CD4-positive, alpha-beta memory T cell (primary cell): ENCODE measurements at regions of chr2 and their contacts with region 1.

Region 1: DNA sequence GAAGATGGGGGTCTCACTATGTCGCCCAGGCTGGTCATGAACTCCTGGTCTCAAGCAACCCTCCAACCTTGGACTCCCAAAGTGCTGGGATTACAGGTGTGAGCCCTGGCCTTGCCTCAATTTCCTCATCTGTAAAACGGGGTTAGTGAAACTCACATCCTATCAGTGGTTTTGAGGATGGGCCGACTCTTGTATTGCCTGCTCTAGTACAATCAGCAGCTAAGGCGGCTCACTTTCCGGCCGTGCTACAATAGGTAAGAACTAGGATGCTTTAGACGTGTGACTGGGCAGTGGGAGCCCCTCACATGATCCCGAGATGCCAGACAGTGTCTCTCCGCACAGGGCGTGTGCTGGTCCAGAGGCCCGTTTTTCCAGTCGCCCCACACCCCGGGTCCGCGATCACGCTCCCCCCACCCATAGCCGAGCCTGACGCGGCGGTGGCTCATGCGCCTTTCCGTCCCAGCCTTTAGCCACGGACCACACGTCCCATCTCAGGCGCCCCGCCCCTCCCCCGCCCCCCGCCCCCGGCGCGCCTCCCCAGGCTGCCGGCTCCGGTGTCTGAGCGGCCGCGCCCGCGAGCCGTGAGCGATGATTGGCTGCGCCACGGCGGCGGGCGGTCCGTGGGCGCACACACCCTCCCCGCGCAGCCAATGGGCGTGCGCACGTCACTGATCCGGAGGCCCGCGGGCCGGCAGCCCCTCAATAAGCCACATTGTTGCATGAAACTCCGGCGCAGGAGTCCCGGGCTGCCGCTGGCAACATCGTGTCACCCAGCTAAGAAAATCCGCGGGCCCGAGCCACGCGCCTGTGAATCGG is at the start of gene HK2:
- DNase-seq: peak; percentile 74 to 80 (median 77)
- H3K4me3 ChIP-seq: peak within 1 kb of the TSS; percentile 61 to 68
- H3K4me3 Mint-ChIP-seq: peak within 1 kb of the TSS; percentile 84 to 96 (median 92)
- H3K27ac ChIP-seq: peak within 1 kb of the TSS; percentile 47
- H3K27ac Mint-ChIP-seq: peak within 1 kb of the TSS; percentile 68 to 91 (median 86)
- H3K4me1 ChIP-seq: peaks cover 33% of the 10 kb centered on the region
- H3K4me1 Mint-ChIP-seq: peaks cover 25 to 43% (median 32%) of the 10 kb centered on the region in 4 donors
- H3K27me3 ChIP-seq: no peaks in the 10 kb centered on the region
- H3K27me3 Mint-ChIP-seq: no peaks in the 10 kb centered on the region
- total RNA-seq, gene HK2: 7.3 to 9.4 TPM

Region 2: DNA sequence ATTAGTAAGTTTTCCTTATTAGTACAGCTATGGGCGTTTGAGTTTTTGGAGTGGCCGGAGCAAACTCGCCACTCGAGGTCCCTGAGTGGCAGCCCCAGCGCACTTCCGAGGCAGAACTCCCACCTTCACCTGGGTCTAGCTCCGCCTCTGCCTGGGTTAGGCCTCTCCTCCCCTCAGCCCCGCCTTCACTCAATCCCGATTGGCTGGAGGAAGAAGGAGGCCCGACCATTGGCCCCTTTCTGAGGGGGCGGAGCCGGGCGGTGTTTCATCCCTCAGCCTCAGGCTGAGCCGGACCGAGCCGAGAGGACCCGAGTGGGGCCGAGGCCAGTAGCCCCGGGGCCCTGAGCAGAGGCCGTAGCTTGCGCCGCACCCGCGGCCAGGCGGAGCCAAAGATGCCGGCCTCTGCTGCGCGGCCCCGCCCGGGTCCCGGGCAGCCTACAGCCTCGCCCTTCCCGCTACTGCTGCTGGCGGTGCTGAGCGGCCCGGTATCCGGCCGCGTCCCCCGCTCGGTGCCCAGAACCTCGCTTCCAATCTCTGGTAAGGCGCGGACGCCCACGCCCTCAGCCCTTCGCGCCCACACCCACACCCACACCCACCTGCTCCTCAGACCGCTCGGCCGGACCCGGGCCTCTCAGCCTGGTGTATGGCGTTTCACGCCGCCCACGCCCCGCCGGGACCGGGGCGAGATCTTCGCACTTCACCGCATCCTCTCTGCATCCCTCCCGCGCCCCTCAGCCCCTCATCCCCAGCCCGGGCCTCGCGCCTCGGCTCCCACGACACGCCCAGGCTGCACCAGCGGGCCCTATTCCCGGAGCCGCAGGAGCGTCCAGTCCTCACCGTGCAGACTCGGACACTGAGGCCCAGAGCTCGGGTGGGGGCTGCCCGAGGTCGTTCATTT is 179.4 kb before region 1 on chr2 and contains the start of gene SEMA4F:
- CTCF ChIA-PET with region 1: no interaction called
- POLR2A ChIA-PET with region 1: no interaction called
- intact Hi-C with region 1: loop called (anchors 2 kb)
- DNase-seq: peak; percentile 91 to 96 (median 94)
- H3K4me3 ChIP-seq: peak within 1 kb of the TSS; percentile 31 to 89
- H3K4me3 Mint-ChIP-seq: peak within 1 kb of the TSS; percentile 88 to 96 (median 92)
- H3K27ac ChIP-seq: peak within 1 kb of the TSS; percentile 58
- H3K27ac Mint-ChIP-seq: peak within 1 kb of the TSS; percentile 62 to 94 (median 90)
- H3K4me1 ChIP-seq: peaks cover 16% of the 10 kb centered on the region
- H3K4me1 Mint-ChIP-seq: peaks cover 13 to 29% (median 22%) of the 10 kb centered on the region in 4 donors
- H3K27me3 ChIP-seq: no peaks in the 10 kb centered on the region
- H3K27me3 Mint-ChIP-seq: peaks cover 2 to 4% of the 10 kb centered on the region in 2 donors
- total RNA-seq, gene SEMA4F: 19.5 to 21.6 TPM

Region 3: DNA sequence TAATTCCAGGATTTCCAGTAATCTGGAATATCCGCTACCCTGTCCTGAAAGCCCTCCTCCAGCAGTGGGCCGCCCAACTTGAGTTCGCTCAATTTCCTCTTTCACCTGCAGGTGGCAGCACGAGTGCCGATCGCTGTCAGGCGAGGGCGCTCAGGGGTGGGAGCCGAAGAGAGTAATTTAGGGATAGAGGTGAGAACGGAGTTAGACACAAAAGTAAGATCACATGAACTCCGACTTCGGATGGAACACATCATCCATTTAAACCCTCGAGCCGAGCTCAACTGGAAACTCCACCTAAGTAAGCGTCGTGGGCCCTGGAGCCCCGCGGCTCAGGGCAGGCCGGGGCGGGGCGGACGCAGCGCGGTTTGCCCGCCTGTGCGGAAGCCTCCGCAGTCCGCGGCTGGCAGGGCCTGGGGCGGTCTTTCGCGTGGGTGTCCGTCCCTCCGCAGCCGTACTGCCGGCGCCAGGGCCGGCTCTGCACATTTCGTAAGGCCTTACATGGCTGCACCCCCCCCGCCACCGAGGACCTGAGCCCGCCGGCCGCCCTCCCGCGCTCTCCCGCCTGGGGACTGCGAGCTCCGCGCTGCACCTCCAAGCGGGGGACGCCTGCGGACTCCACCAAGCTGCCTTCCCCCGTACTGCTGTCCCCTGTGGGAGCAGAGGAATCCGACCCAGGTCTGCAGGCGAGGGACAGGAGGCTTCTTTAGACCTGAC is 118.4 kb before region 1 on chr2:
- CTCF ChIA-PET with region 1: interaction called, 81 read pairs
- POLR2A ChIA-PET with region 1: interaction called, 6 read pairs
- intact Hi-C with region 1: loop called (anchors 1 kb)
- DNase-seq: peak; percentile 70 to 78 (median 75)
- H3K4me3 ChIP-seq: peak overlapping the region in 1 of 2 donors; percentile 34
- H3K4me3 Mint-ChIP-seq: peak overlapping the region; percentile 84 to 92 (median 88)
- H3K27ac ChIP-seq: no peak overlapping the region
- H3K27ac Mint-ChIP-seq: peak overlapping the region in 2 of 7 donors; percentile 29 to 46
- H3K4me1 ChIP-seq: peaks cover 6% of the 10 kb centered on the region
- H3K4me1 Mint-ChIP-seq: peaks cover 5 to 10% (median 7%) of the 10 kb centered on the region in 4 donors
- H3K27me3 ChIP-seq: peaks cover 15% of the 10 kb centered on the region
- H3K27me3 Mint-ChIP-seq: peaks cover 6 to 10% of the 10 kb centered on the region in 2 donors

Region 4: GRCh38 chr2:74822771-74823566 is 10.7 kb before region 1 on chr2:
- CTCF ChIA-PET with region 1: interaction called, 21 read pairs
- POLR2A ChIA-PET with region 1: no interaction called
- intact Hi-C with region 1: no loop called
- DNase-seq: no peak
- H3K4me3 ChIP-seq: no peak overlapping the region
- H3K4me3 Mint-ChIP-seq: no peak overlapping the region
- H3K27ac ChIP-seq: no peak overlapping the region
- H3K27ac Mint-ChIP-seq: no peak overlapping the region
- H3K4me1 ChIP-seq: no peaks in the 10 kb centered on the region
- H3K4me1 Mint-ChIP-seq: no peaks in the 10 kb centered on the region
- H3K27me3 ChIP-seq: no peaks in the 10 kb centered on the region
- H3K27me3 Mint-ChIP-seq: peaks cover 3 to 6% of the 10 kb centered on the region in 2 donors

Region 5: GRCh38 chr2:74845217-74846011 is 11.8 kb after region 1 on chr2:
- CTCF ChIA-PET with region 1: interaction called, 63 read pairs
- POLR2A ChIA-PET with region 1: interaction called, 148 read pairs
- intact Hi-C with region 1: loop called (anchors 1 kb)
- DNase-seq: peak in 1 of 5 donors; percentile 57
- H3K4me3 ChIP-seq: no peak overlapping the region
- H3K4me3 Mint-ChIP-seq: peak overlapping the region; percentile 75 to 94 (median 80)
- H3K27ac ChIP-seq: peak overlapping the region; percentile 12
- H3K27ac Mint-ChIP-seq: peak overlapping the region; percentile 85 to 94 (median 90)
- H3K4me1 ChIP-seq: peaks cover 98% of the 10 kb centered on the region
- H3K4me1 Mint-ChIP-seq: peaks cover 62 to 100% (median 89%) of the 10 kb centered on the region in 4 donors
- H3K27me3 ChIP-seq: no peaks in the 10 kb centered on the region
- H3K27me3 Mint-ChIP-seq: no peaks in the 10 kb centered on the region

Region 6: GRCh38 chr2:74854401-74854800 is 20.8 kb after region 1 on chr2:
- CTCF ChIA-PET with region 1: interaction called, 63 read pairs
- POLR2A ChIA-PET with region 1: interaction called, 148 read pairs
- intact Hi-C with region 1: loop called (anchors 1 kb)
- DNase-seq: no peak
- H3K4me3 ChIP-seq: no peak overlapping the region
- H3K4me3 Mint-ChIP-seq: no peak overlapping the region
- H3K27ac ChIP-seq: no peak overlapping the region
- H3K27ac Mint-ChIP-seq: peak overlapping the region in 2 of 7 donors; percentile 22 to 36
- H3K4me1 ChIP-seq: peaks cover 19% of the 10 kb centered on the region
- H3K4me1 Mint-ChIP-seq: peaks cover 19 to 46% (median 31%) of the 10 kb centered on the region in 4 donors
- H3K27me3 ChIP-seq: no peaks in the 10 kb centered on the region
- H3K27me3 Mint-ChIP-seq: no peaks in the 10 kb centered on the region

Region 7: DNA sequence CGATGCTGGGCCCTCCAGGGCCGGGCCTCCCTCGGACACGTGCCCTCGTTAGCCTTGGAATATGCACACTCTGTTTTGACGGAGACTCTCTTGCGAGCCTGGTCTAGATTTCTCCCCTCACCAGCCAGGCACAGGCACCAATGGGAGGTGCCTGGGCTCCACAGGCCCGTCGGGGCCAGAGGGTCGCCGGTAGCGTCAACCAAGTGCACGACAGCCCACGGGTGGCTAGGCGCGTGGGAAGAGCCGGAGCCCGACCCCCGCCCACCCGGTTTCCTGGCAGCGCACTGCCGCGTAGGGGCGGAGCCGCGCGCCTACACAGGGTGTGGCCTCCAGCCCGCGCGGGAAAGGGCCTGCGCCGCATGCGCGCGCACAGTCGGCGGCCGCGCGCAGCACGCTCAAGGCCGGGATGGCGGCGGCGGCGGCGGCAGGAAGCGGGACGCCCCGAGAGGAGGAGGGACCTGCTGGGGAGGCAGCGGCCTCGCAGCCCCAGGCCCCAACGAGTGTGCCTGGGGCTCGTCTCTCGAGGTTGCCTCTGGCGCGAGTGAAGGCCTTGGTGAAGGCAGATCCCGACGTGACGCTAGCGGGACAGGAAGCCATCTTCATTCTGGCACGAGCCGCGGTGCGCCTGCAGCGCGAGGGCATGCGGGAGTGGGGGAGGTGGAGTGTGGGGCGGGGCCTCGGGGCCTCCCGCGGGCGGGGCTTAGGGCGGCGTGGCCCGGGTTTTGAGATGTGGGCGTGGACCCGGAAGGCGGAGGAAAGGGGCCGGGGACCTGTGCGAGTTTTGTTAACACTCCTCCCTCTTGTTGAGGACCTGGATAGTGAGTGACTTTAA is 124.9 kb after region 1 on chr2 and contains the start of gene POLE4:
- CTCF ChIA-PET with region 1: no interaction called
- POLR2A ChIA-PET with region 1: no interaction called
- intact Hi-C with region 1: loop called (anchors 1 kb)
- DNase-seq: peak; percentile 93 to 94 (median 94)
- H3K4me3 ChIP-seq: peak within 1 kb of the TSS; percentile 72 to 79
- H3K4me3 Mint-ChIP-seq: peak within 1 kb of the TSS; percentile 83 to 91 (median 86)
- H3K27ac ChIP-seq: peak within 1 kb of the TSS; percentile 74
- H3K27ac Mint-ChIP-seq: peak within 1 kb of the TSS; percentile 85 to 95 (median 92)
- H3K4me1 ChIP-seq: peaks cover 33% of the 10 kb centered on the region
- H3K4me1 Mint-ChIP-seq: peaks cover 33 to 62% (median 49%) of the 10 kb centered on the region in 4 donors
- H3K27me3 ChIP-seq: no peaks in the 10 kb centered on the region
- H3K27me3 Mint-ChIP-seq: no peaks in the 10 kb centered on the region
- total RNA-seq, gene POLE4: 46.1 to 49.0 TPM

Region 8: DNA sequence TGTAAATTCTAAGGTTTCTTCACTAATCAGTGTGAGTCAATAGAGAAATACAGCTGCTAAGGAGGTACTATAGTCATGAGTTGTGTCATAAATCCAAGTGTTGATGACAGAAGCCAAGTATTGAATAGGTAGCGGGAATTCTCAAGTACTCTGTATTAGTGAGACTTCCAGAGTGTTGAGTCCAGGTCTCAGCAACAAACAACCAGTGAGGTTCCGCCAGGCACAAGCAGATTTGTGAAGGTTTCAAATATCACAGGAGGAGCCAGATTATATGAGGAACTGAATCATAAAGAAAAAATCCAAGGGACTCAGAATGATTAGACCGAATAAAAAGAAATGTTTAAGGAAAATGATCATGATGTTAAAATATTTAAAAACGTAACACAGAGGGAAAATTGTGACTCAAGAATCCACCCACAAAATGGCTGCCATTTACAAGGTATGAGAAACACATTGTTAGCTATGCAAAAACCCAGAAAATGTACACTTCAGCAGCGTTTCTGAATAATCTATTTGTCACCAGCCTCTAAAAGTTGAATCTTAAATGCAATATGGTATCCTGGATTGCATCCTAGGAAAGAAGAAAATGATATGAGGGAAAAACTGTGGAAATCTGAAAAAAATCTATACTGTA is 754.4 kb after region 1 on chr2:
- CTCF ChIA-PET with region 1: no interaction called
- POLR2A ChIA-PET with region 1: no interaction called
- intact Hi-C with region 1: no loop called
- DNase-seq: no peak
- H3K4me3 ChIP-seq: no peak overlapping the region
- H3K4me3 Mint-ChIP-seq: no peak overlapping the region
- H3K27ac ChIP-seq: no peak overlapping the region
- H3K27ac Mint-ChIP-seq: no peak overlapping the region
- H3K4me1 ChIP-seq: no peaks in the 10 kb centered on the region
- H3K4me1 Mint-ChIP-seq: no peaks in the 10 kb centered on the region
- H3K27me3 ChIP-seq: no peaks in the 10 kb centered on the region
- H3K27me3 Mint-ChIP-seq: peaks cover 6 to 14% of the 10 kb centered on the region in 2 donors